ENCODE measurements at regions of chr3 and their contacts with region 1.

Region 1: GRCh38 chr3:168865022-168865551 is 769.4 kb upstream of the GOLIM4 start:
- DNase-seq: no peak
- H3K4me3 Mint-ChIP-seq: no peak overlapping the region
- H3K27ac Mint-ChIP-seq: no peak overlapping the region
- H3K4me1 Mint-ChIP-seq: no peaks in the 10 kb centered on the region
- H3K27me3 Mint-ChIP-seq: no peaks in the 10 kb centered on the region

Region 2: GRCh38 chr3:169668957-169669681 is 804.0 kb after region 1 on chr3:
- intact Hi-C with region 1: loop called (anchors 5 kb)
- DNase-seq: no peak
- H3K4me3 Mint-ChIP-seq: peak overlapping the region; percentile 14
- H3K27ac Mint-ChIP-seq: no peak overlapping the region
- H3K4me1 Mint-ChIP-seq: peaks cover 17% of the 10 kb centered on the region
- H3K27me3 Mint-ChIP-seq: peaks cover 84% of the 10 kb centered on the region